ENCODE measurements at regions of chr9 and their contacts with region 1.

Region 1: DNA sequence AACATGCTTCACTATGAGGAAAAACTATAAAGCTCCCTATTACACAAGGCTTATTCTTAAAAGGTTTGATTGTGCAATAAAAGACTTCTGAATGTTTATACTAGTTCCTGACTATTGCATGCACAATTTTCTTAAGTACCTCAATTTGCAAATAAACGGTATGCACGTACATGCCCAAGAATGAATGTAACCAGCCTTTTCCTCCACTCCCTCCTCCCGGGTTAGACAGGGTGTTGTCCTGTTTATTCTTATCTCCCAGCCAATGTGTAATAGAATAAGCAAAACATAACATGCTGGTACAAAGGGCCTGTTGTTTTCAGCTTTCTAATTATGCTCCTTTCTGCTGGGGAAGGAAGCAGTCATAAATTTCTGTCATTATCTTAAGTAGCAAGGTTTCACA is 79.1 kb downstream of the AOPEP start:
- DNase-seq: peak; percentile 93
- H3K4me3 Mint-ChIP-seq: peak overlapping the region; percentile 51
- H3K27ac Mint-ChIP-seq: peak overlapping the region; percentile 100
- H3K4me1 Mint-ChIP-seq: peaks cover 50% of the 10 kb centered on the region
- H3K27me3 Mint-ChIP-seq: no peaks in the 10 kb centered on the region
- CTCF ChIP-seq: no peak

Region 2: GRCh38 chr9:94867281-94867841 is 61.8 kb after region 1 on chr9:
- CTCF ChIA-PET with region 1: no interaction called
- POLR2A ChIA-PET with region 1: interaction called, 50 read pairs
- intact Hi-C with region 1: loop called (anchors 10 kb)
- DNase-seq: peak; percentile 82
- H3K4me3 Mint-ChIP-seq: peak overlapping the region; percentile 31
- H3K27ac Mint-ChIP-seq: peak overlapping the region; percentile 89
- H3K4me1 Mint-ChIP-seq: peaks cover 44% of the 10 kb centered on the region
- H3K27me3 Mint-ChIP-seq: no peaks in the 10 kb centered on the region
- CTCF ChIP-seq: no peak

Region 3: DNA sequence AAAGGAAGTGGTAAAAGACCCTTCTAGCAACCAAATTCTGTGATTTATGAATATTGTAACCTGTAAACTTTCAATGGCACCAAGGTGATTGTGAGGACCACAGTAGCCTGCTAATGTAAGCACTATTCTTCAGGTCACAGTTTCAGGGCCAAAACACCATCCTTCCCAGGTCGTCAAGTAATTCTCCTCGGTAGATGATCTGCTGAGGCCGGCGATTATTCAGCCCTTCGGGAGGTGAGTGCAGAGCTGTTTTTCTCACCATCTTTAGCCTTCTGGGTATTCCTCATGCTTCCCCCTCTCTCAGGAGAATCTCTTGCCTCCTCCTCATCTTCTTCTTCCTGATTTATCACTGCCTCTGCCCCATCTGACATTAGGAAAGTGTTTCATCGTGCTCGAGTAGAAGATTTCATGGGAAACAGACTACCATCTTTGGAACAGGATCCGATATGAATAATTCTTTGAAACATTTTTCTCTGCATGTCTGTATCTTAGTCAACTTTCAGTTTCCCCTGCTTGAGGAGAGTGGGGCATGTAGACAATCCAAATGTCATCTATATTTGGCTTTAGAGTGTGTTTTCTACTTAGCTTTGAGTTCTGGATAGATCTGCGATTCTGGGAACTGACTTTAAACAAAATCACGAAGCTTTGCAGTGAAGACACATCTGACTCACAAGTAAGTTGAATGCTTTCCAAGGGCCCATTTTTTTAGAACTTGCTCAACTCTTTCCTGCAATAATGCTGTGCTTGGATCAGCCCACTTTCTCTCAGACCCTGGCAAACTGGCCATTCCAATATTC is 94.8 kb after region 1 on chr9:
- CTCF ChIA-PET with region 1: interaction called, 4 read pairs
- POLR2A ChIA-PET with region 1: interaction called, 51 read pairs
- intact Hi-C with region 1: no loop called
- DNase-seq: peak; percentile 94
- H3K4me3 Mint-ChIP-seq: peak overlapping the region; percentile 64
- H3K27ac Mint-ChIP-seq: peak overlapping the region; percentile 97
- H3K4me1 Mint-ChIP-seq: peaks cover 30% of the 10 kb centered on the region
- H3K27me3 Mint-ChIP-seq: no peaks in the 10 kb centered on the region
- CTCF ChIP-seq: no peak

Region 4: DNA sequence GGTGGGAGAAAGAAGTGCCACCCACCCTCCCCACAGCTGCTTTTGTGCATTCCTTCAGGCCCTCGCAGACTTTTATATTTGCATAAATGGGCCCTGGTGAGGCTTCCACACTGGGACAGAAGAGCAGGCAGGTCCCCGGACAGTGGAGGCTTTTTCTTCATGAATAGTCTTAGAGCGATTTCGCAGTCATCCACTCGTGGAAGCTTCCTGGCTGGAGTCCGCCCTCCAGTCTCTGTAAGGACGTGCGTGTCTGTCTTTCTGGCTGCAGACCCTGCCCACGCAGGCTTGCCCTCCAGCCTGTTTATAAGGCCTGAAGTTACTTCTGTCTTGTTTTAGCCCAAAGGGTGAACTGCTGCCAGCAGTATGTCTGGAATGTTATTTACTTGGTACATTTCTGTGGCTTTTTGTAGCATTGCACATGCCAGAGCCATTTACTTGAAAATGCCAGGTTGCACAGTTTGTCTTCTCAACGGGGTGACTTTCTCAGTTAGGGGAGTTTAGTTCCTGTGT is 116.6 kb after region 1 on chr9:
- CTCF ChIA-PET with region 1: interaction called, 11 read pairs
- POLR2A ChIA-PET with region 1: interaction called, 80 read pairs
- intact Hi-C with region 1: loop called (anchors 2 kb)
- DNase-seq: peak; percentile 82
- H3K4me3 Mint-ChIP-seq: peak overlapping the region; percentile 43
- H3K27ac Mint-ChIP-seq: peak overlapping the region; percentile 85
- H3K4me1 Mint-ChIP-seq: peaks cover 75% of the 10 kb centered on the region
- H3K27me3 Mint-ChIP-seq: no peaks in the 10 kb centered on the region
- CTCF ChIP-seq: no peak

Region 5: DNA sequence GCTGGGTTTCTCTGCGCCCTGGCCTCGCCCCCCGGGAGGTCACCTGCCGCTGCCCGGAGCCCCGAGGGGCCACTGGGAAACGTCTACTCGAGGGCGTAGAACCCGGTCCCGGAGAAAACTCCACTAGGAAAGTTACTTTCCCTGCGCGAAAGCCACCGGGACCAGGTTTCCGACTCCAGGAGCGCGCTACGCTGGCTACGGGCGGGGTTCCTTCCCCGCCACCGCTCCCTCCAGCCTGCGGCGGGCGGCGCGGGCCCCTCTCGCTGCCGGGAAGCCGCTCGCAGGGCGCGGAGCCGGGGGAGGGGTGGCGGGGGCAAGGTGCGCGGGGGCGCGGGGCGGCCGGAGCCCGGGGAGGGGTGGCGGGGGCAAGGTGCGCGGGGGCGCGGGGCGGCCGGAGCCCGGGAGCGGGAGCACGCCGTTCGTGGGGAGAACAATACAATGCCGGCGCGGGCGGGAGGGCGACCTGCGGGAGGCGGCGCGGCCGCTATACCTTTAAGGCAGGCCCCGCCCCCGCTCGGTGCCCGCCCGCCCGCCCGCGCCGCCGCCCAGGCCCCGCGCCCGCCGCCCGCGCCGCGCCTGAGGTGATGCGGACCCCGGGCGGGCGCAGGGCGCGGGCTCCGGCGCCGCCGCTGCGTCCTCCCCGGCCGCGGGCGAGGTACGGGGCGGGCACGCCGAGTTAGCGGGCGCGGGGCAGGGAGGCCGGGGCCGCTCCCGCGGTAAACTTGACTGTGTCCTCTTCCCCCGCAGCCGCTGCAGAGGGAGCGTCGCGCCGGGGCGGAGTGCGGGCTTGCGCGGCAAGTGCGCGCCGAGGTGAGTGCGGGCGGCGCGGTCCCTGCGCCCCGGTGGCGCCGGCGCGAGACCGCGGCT is 199.1 kb after region 1 on chr9:
- CTCF ChIA-PET with region 1: interaction called, 4 read pairs
- POLR2A ChIA-PET with region 1: interaction called, 137 read pairs
- intact Hi-C with region 1: loop called (anchors 1 kb)
- DNase-seq: peak; percentile 51
- H3K4me3 Mint-ChIP-seq: peak overlapping the region; percentile 85
- H3K27ac Mint-ChIP-seq: peak overlapping the region; percentile 97
- H3K4me1 Mint-ChIP-seq: peaks cover 35% of the 10 kb centered on the region
- H3K27me3 Mint-ChIP-seq: no peaks in the 10 kb centered on the region
- CTCF ChIP-seq: no peak

Region 6: DNA sequence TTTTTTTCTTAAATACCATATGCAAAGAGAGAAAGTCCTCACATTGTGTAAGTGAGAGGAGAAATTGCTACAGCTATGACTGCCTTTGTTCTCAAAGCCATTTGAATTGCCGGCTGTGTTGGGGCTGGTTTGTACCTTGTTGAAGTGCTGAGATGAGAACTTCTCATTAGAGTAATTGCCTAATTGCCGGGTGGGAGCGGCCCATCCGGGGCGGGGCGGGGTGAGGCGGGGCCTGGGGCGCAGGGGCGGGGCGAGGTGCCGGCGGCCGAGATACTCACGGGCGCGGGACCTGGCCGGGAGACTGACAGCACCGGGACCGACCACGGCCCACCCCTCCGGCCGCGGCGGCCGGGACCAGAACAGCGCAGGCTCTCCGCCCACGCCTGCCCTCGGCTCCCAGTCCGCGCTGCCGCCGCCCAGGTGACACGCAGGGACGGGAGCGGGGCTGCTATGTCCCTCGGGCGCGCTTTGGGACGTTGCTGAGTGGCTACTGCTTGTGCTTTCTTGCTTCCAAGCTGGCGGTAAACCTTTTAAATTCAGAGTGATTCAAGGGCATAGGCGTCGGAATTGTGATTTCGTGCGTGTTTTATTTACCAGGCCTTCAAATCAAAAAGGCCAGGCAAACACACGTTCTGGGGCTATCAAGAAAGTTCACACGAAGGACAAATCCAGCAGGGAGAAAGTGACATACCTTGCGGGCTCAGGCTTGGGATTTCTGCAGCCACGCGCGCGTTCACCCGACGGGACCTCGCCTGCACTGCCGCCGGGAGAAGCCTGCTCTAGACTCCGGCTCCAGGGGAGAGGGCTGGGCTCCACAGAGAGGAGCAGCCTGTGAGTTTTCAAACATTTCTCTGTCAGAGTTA is 242.9 kb after region 1 on chr9:
- CTCF ChIA-PET with region 1: no interaction called
- POLR2A ChIA-PET with region 1: interaction called, 16 read pairs
- intact Hi-C with region 1: no loop called
- DNase-seq: peak; percentile 85
- H3K4me3 Mint-ChIP-seq: peak overlapping the region; percentile 78
- H3K27ac Mint-ChIP-seq: peak overlapping the region; percentile 76
- H3K4me1 Mint-ChIP-seq: peaks cover 16% of the 10 kb centered on the region
- H3K27me3 Mint-ChIP-seq: no peaks in the 10 kb centered on the region
- CTCF ChIP-seq: no peak

Measured in MCF 10A (cell line).